ENCODE measurements at regions of chr12 and their contacts with region 1.

Region 1: GRCh38 chr12:121678716-121679580 is 9.5 kb upstream of the MORN3 start:
- DNase-seq: no peak
- ATAC-seq: no peak
- H3K4me3 Mint-ChIP-seq: no peak overlapping the region
- H3K27ac Mint-ChIP-seq: no peak overlapping the region
- H3K4me1 Mint-ChIP-seq: no peaks in the 10 kb centered on the region
- H3K27me3 Mint-ChIP-seq: no peaks in the 10 kb centered on the region
- CTCF ChIP-seq: no peak

Region 2: GRCh38 chr12:121334513-121335343 is 344.2 kb before region 1 on chr12:
- CTCF ChIA-PET with region 1: interaction called, 4 read pairs
- POLR2A ChIA-PET with region 1: no interaction called
- intact Hi-C with region 1: loop called (anchors 1 kb)
- DNase-seq: no peak
- ATAC-seq: peak; percentile 69
- H3K4me3 Mint-ChIP-seq: no peak overlapping the region
- H3K27ac Mint-ChIP-seq: no peak overlapping the region
- H3K4me1 Mint-ChIP-seq: peaks cover 2% of the 10 kb centered on the region
- H3K27me3 Mint-ChIP-seq: no peaks in the 10 kb centered on the region
- CTCF ChIP-seq: peak; percentile 82

Region 3: DNA sequence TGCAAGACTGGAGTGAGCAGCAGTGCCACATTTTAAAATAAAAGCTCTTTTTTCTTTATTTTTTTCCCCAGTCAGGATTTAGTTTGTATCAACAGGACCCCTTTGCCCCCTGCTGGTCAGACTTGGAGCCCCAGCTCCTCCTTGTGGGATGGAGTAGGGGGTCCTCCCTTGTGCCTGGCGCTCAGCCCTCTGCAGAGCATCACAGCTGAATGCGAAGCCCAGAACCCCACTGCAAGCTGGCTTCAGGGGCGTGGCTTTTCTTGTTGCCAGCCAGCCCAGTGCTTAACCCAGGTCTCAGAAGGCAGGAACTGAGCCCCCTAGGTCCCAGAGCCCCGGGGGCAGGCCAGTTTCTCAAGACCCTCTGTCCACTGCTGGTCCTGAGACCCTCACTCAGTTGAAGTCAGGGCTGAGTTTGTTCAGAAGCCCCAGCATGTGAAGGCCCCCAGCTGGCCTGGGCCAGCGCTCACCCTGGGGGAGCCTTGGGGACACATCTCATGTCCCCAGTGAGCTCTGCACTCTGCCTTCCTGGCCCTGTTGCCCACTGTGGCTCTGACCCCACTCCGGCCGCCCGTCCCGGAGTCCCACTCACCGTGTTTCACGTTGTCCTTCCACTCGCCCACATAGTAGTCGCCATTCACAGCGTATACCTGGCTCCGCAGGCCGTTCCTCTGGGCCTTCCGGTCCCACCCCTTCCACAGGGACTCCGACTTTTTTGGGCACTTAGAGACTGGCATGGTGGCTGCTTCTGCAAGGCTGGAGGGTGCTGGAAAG is 10.0 kb before region 1 on chr12:
- CTCF ChIA-PET with region 1: interaction called, 4 read pairs
- POLR2A ChIA-PET with region 1: interaction called, 4 read pairs
- intact Hi-C with region 1: loop called (anchors 2 kb)
- DNase-seq: peak; percentile 38
- ATAC-seq: no peak
- H3K4me3 Mint-ChIP-seq: no peak overlapping the region
- H3K27ac Mint-ChIP-seq: peak overlapping the region; percentile 14
- H3K4me1 Mint-ChIP-seq: peaks cover 49% of the 10 kb centered on the region
- H3K27me3 Mint-ChIP-seq: no peaks in the 10 kb centered on the region
- CTCF ChIP-seq: no peak

Measured in activated B cell treated with CpG ODN at 0.5 μM for 24 hours (primary cell).